ENCODE measurements at regions of chr17 and their contacts with region 1.

Region 1: DNA sequence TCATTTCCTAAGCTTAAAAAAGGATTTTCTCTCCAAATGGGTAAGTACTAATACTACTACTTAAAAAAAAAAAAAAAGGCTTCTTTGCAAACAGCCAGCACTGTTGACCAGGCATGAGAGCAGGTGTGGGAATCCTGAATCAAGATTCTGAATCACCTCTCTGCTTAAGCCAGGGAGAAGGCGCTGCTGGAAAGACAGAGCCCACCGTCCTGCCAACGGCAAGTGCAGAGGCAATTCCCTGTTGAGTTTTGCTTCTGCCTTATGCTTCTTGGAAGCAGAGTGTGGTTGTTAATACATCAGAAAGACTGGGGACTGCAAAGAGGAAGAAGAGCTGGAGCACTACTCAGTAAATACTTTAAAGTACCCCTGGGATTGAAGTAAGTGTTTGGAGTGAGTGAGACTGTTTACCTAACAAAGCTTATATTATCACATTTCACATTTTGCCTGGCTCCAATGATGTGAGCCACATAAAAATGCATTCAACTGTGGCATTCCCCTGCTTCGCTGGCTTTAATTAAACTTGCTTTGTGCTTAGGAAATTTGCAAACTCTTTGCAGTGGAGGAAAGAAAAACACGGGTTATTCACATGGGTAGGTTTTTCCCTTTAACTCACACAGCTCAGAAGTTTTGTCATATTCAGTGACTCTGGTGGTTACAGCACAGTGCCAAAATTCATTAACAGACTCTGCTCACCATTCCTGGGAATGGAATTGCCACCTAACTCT is 86.0 kb upstream of the KIF2B start:
- DNase-seq: no peak
- H3K4me3 ChIP-seq: no peak overlapping the region
- H3K27ac ChIP-seq: no peak overlapping the region
- H3K4me1 ChIP-seq: no peaks in the 10 kb centered on the region
- H3K27me3 ChIP-seq: no peaks in the 10 kb centered on the region
- CTCF ChIP-seq: no peak
- EP300 ChIP-seq: no peak
- POLR2A ChIP-seq: no peak

Region 2: DNA sequence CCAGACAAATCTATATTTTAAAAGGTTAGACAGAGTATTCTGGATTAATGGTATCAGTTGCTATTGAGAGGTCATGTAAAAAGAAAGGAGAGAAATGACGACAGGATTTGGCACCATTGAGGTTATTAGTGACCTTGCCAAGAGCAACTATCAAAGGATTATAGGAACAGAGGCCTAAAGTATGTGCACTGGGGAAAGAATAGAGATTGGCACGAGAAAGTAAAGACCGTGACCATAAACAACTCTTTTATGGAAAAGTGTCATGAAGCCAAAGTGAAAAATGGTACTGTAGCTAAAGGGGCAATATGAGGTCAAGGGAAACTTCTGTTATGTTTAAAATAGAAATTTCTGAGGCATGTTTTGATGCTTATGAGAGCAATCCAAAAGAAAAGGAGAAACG is 29.1 kb before region 1 on chr17:
- intact Hi-C with region 1: loop called in 1 of 4 experiments (anchors 1 kb)
- DNase-seq: no peak
- H3K4me3 ChIP-seq: no peak overlapping the region
- H3K27ac ChIP-seq: no peak overlapping the region
- H3K4me1 ChIP-seq: no peaks in the 10 kb centered on the region
- H3K27me3 ChIP-seq: no peaks in the 10 kb centered on the region
- CTCF ChIP-seq: no peak
- EP300 ChIP-seq: no peak
- POLR2A ChIP-seq: no peak

Measured in ovary (tissue), 10 donors.